Posterior vena cava (tissue), 2 donors: ENCODE measurements at regions of chr7 and their contacts with region 1.

Region 1: DNA sequence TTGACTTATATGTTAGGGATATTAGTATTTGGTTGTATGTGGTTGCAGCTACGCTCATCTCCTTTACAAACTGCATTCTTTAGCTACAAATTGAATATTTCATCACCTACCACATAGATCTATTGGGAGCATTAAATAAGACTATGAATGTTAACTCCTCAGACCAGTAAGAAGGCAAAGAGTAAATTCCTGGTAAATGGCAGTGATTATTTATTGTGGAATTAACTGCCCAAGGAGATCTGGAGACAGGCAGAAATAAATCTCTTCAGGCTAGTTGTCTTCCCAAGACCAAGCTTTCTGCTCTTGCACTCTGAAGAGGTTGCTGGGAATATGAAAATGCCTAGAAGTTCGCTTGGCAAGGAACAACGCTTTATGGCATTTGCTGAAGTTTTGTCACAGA is 74.6 kb downstream of the ANLN start:
- DNase-seq: no peak

Region 2: DNA sequence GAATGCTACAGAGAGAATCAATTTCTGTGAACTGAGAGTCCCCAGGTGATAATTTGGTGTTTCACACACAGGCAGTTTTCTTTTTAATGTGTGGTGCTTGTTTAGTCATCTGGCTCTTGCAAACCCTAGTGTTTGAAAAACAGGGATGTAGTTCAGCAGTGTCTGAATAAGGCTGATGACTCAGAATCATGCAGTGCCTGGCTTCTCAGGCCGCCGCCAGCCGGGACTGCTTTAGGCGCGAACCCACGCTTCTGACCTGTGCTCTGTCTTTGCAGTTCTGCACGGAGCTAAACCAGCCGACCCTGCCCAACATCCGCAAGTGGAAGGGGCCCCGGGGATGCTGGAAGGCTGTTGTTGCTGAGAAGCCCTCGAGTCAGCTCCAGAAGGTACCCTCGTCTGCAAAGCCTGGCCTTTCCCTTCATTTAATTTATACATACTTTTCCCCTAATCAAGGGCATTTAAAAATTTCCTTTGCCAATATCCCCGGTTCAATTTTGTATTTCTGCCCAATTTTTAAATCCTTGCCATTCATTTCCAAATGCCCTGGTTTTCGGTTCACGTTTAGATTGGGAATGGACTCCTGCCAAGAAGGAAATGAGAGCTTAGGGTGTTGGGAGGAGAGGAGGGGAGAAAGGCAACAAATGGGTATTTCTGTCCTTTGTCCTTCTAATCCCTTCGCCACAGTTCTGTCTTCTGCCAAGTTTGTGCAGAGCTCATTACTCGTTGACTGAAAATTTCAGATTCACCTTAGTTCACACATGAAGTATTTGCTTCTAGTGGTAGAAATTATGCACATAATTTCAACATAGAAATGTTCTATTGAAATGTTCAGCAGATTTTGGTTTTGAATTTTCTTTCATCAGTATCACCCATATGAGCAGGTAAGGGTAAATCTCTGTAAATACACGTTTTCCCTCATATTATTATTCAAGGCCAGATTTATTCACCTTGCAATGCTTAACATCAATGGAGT is 183.1 kb before region 1 on chr7:
- intact Hi-C with region 1: no loop called
- DNase-seq: peak; percentile 90

Region 3: DNA sequence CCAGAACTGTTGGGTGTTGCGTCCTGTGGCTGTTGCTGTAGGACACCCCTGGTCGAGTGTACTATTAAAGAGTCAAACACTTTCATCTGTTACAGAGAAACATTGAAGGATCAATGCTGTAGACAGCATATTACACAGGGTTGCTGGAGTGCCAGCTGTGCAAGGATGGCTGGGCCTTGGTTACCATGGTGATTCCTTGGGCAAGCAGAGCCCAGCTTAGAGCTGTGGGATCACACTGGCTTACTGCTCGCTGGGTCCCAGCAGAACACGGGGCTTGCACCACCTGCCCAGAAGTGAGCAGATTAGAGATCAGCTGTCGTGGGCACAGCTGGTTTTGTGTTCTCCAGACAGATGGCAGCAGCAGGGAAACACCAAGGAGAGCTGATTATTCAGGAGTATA is 1295.3 kb after region 1 on chr7:
- intact Hi-C with region 1: loop called in 1 of 2 experiments (anchors 5 kb)
- DNase-seq: no peak